Psoas muscle (tissue), 8 donors: ENCODE measurements at regions of chr10 and their contacts with region 1.

Region 1: GRCh38 chr10:133565441-133566294 is at the start of gene SYCE1:
- DNase-seq: peak in 1 of 2 donors; percentile 30
- ATAC-seq: peak in 2 of 4 donors; percentile 23 to 41
- H3K4me3 ChIP-seq: no peak within 1 kb of the TSS
- H3K27ac ChIP-seq: no peak within 1 kb of the TSS
- H3K4me1 ChIP-seq: no peaks in the 10 kb centered on the region
- H3K27me3 ChIP-seq: peaks cover 4 to 36% (median 5%) of the 10 kb centered on the region in 3 donors
- CTCF ChIP-seq: no peak
- total RNA-seq, gene SYCE1: 0.38 to 0.47 TPM in 2 of 4 donors, not detected in the others

Region 2: GRCh38 chr10:133357285-133358151 is 208.2 kb before region 1 on chr10 and contains the start of gene FUOM:
- intact Hi-C with region 1: no loop called
- DNase-seq: peak; percentile 68 to 82
- ATAC-seq: peak; percentile 78 to 90 (median 84)
- H3K4me3 ChIP-seq: peak within 1 kb of the TSS; percentile 79
- H3K27ac ChIP-seq: peak within 1 kb of the TSS; percentile 53
- H3K4me1 ChIP-seq: peaks cover 4% of the 10 kb centered on the region
- H3K27me3 ChIP-seq: peaks cover 0 to 8% (median 0%) of the 10 kb centered on the region in 3 donors
- CTCF ChIP-seq: no peak
- total RNA-seq, gene FUOM: 3.0 to 6.7 (median 4.5) TPM

Region 3: DNA sequence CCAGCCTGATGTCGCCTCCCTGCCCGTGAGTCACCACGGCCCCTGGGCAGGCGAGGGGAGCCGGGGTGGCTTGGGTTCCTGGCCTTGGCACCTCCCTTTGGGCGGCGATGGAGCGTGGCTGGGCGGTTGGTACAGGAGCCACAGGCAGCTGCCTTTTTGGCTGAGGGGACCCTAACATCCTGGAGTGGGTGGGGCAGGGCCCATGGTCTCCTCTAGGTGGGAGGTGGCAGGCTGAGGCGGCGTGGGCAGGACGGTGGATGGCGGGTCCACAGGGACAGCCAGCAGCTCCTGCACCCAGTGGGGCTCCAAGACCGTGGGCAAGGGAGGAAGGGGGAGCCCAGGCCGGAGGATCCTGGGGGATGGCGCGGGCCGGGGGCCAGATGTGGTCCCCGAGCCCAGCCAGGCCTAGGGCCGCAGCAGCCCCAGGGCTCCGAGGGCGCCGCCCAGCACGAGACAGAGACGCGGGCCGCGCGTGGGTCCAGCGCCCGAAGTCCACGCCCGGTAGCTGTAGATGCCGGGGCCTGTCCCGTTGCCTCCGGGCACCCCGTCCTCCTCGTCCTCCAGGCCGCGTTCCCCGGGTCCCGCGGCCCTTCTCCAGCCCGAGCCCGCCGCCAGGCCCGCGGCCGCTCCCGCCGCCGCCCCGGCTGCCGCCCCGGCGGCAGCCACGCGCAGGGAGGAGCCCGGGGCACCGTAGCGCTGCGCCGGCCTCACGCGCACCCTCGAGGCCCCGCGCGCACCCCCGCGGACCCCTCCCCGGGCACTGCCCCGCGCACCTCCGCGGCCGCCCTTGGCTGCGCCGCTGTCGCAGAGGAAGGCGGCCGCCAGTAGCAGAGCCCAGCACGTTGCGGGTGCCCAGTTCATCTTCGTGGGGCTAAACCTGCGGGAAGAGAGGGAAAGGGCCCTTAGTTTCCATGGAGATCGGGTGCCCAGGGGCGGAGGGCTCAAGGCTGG is 142.6 kb before region 1 on chr10:
- intact Hi-C with region 1: loop called in 1 of 2 experiments (anchors 5 kb)
- DNase-seq: no peak
- ATAC-seq: peak in 2 of 4 donors; percentile 22 to 45
- H3K4me3 ChIP-seq: no peak overlapping the region
- H3K27ac ChIP-seq: no peak overlapping the region
- H3K4me1 ChIP-seq: peaks cover 3% of the 10 kb centered on the region
- H3K27me3 ChIP-seq: peaks cover 0 to 15% (median 8%) of the 10 kb centered on the region in 3 donors
- CTCF ChIP-seq: no peak